ENCODE measurements at regions of chr6 and their contacts with region 1.

Region 1: GRCh38 chr6:31739639-31740396 is at the start of gene MSH5:
- DNase-seq: peak; percentile 100
- H3K4me3 ChIP-seq: peak within 1 kb of the TSS; percentile 23 to 76 (median 61)
- H3K27ac ChIP-seq: peak within 1 kb of the TSS; percentile 94
- H3K4me1 ChIP-seq: peaks cover 31% of the 10 kb centered on the region
- H3K27me3 ChIP-seq: no peaks in the 10 kb centered on the region
- CTCF ChIP-seq: no peak
- POLR2A ChIP-seq: peak; percentile 65
- total RNA-seq, gene MSH5: 43.2 and 43.8 TPM in 2 replicates

Region 2: GRCh38 chr6:31308050-31308844 is 431.6 kb before region 1 on chr6:
- CTCF ChIA-PET with region 1: no interaction called
- POLR2A ChIA-PET with region 1: no interaction called
- dilution Hi-C with region 1: no loop called
- intact Hi-C with region 1: no loop called
- DNase-seq: no peak
- H3K4me3 ChIP-seq: no peak overlapping the region
- H3K27ac ChIP-seq: no peak overlapping the region
- H3K4me1 ChIP-seq: no peaks in the 10 kb centered on the region
- H3K27me3 ChIP-seq: peaks cover 44% of the 10 kb centered on the region in 2 experiments
- CTCF ChIP-seq: no peak
- POLR2A ChIP-seq: no peak

Region 3: DNA sequence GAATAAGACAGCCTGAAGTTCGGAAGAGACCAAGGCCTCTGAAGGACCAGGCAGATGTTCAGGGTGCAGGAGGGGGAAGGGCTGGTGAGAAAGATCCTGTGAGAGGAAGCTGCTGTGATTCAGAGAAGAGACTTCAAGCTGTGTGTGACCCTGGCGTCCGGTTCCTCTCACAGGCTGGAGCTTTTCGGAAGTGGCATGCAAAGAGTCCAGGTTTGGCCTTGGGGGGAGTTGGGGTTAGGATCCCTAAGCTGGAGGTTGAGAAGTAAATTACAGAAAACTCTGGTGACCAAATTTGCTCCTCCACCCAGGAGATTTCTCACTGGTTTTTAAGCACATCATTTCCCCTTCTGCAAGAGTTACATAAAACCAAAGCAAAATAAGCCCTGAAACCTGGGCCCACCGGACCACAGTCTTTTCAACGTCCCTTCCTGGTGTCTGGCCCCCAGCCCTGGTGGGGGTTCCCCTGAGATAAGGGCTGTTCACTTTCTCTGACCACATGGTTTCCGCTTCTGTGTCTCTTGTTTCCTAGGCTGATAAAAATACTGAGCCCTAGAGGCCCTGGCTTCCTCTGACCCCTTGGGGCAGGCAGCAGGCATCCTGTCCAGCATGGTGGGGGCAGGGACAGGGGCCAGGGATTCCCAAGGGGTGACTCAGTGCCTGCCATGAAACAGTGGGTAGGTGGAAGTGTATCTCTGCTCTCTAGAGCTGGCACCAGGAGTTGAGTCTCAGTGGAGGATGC is 179.7 kb before region 1 on chr6:
- CTCF ChIA-PET with region 1: no interaction called
- POLR2A ChIA-PET with region 1: no interaction called
- dilution Hi-C with region 1: no loop called
- intact Hi-C with region 1: no loop called
- DNase-seq: peak; percentile 99
- H3K4me3 ChIP-seq: peak overlapping the region in 1 of 3 experiments; percentile 29
- H3K27ac ChIP-seq: peak overlapping the region; percentile 98
- H3K4me1 ChIP-seq: peaks cover 69% of the 10 kb centered on the region
- H3K27me3 ChIP-seq: no peaks in the 10 kb centered on the region
- CTCF ChIP-seq: no peak
- POLR2A ChIP-seq: peak; percentile 71

Region 4: GRCh38 chr6:31619805-31620585 is 119.8 kb before region 1 on chr6:
- CTCF ChIA-PET with region 1: no interaction called
- POLR2A ChIA-PET with region 1: no interaction called
- dilution Hi-C with region 1: no loop called
- intact Hi-C with region 1: loop called (anchors 1 kb)
- DNase-seq: peak; percentile 100
- H3K4me3 ChIP-seq: peak overlapping the region in 2 of 3 experiments; percentile 57 to 80
- H3K27ac ChIP-seq: peak overlapping the region; percentile 95
- H3K4me1 ChIP-seq: peaks cover 13% of the 10 kb centered on the region
- H3K27me3 ChIP-seq: no peaks in the 10 kb centered on the region
- CTCF ChIP-seq: no peak
- POLR2A ChIP-seq: peak; percentile 73

Region 5: GRCh38 chr6:31660381-31661261 is 79.2 kb before region 1 on chr6 and contains the start of gene C6orf47:
- CTCF ChIA-PET with region 1: no interaction called
- POLR2A ChIA-PET with region 1: no interaction called
- dilution Hi-C with region 1: no loop called
- intact Hi-C with region 1: loop called (anchors 2 kb)
- DNase-seq: peak; percentile 87
- H3K4me3 ChIP-seq: peak within 1 kb of the TSS; percentile 30 to 76 (median 70)
- H3K27ac ChIP-seq: peak within 1 kb of the TSS; percentile 62
- H3K4me1 ChIP-seq: peaks cover 44% of the 10 kb centered on the region
- H3K27me3 ChIP-seq: no peaks in the 10 kb centered on the region
- CTCF ChIP-seq: no peak
- POLR2A ChIP-seq: peak; percentile 92
- total RNA-seq, gene C6orf47: 12.8 and 15.0 TPM in 2 replicates

Region 6: DNA sequence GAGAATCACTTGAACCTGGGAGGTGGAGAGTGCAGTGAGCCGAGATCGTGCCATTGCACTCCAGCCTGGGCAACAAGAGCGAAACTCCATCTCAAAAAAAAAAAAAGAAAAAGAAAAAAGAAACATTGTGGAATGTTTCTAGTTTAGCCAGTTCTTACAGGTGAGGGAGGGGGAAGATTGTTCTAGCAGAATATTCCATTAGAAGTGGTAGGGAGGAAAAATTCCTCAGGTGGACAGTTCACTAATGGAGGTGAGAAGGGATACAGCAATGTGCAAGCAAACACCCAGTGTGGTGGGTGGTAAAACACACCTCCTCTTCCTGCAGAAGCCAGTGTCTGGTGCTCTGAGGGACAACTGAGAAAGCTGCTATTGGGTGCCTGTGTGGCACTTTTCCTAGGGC is 43.3 kb before region 1 on chr6:
- CTCF ChIA-PET with region 1: no interaction called
- POLR2A ChIA-PET with region 1: no interaction called
- dilution Hi-C with region 1: no loop called
- intact Hi-C with region 1: no loop called
- DNase-seq: no peak
- H3K4me3 ChIP-seq: no peak overlapping the region
- H3K27ac ChIP-seq: no peak overlapping the region
- H3K4me1 ChIP-seq: peaks cover 4% of the 10 kb centered on the region
- H3K27me3 ChIP-seq: no peaks in the 10 kb centered on the region
- CTCF ChIP-seq: no peak
- POLR2A ChIP-seq: no peak

Region 7: GRCh38 chr6:31729515-31729978 is 10.3 kb before region 1 on chr6:
- CTCF ChIA-PET with region 1: interaction called, 13 read pairs
- POLR2A ChIA-PET with region 1: interaction called, 4 read pairs
- dilution Hi-C with region 1: no loop called
- intact Hi-C with region 1: loop called (anchors 1 kb)
- DNase-seq: peak; percentile 90
- H3K4me3 ChIP-seq: peak overlapping the region; percentile 66 to 94 (median 70)
- H3K27ac ChIP-seq: peak overlapping the region; percentile 54
- H3K4me1 ChIP-seq: peaks cover 37% of the 10 kb centered on the region
- H3K27me3 ChIP-seq: no peaks in the 10 kb centered on the region
- CTCF ChIP-seq: peak in 1 of 2 donors; percentile 73
- POLR2A ChIP-seq: no peak

Region 8: GRCh38 chr6:31795616-31796298 is 55.9 kb after region 1 on chr6 and contains the start of gene VARS1:
- CTCF ChIA-PET with region 1: interaction called, 8 read pairs
- POLR2A ChIA-PET with region 1: interaction called, 7 read pairs
- dilution Hi-C with region 1: no loop called
- intact Hi-C with region 1: loop called (anchors 2 kb)
- DNase-seq: peak; percentile 87
- H3K4me3 ChIP-seq: peak within 1 kb of the TSS; percentile 49 to 71 (median 67)
- H3K27ac ChIP-seq: peak within 1 kb of the TSS; percentile 89
- H3K4me1 ChIP-seq: peaks cover 15% of the 10 kb centered on the region
- H3K27me3 ChIP-seq: no peaks in the 10 kb centered on the region
- CTCF ChIP-seq: peak; percentile 78 to 88
- POLR2A ChIP-seq: no peak
- total RNA-seq, gene VARS1: 121 and 125 TPM in 2 replicates

Region 9: DNA sequence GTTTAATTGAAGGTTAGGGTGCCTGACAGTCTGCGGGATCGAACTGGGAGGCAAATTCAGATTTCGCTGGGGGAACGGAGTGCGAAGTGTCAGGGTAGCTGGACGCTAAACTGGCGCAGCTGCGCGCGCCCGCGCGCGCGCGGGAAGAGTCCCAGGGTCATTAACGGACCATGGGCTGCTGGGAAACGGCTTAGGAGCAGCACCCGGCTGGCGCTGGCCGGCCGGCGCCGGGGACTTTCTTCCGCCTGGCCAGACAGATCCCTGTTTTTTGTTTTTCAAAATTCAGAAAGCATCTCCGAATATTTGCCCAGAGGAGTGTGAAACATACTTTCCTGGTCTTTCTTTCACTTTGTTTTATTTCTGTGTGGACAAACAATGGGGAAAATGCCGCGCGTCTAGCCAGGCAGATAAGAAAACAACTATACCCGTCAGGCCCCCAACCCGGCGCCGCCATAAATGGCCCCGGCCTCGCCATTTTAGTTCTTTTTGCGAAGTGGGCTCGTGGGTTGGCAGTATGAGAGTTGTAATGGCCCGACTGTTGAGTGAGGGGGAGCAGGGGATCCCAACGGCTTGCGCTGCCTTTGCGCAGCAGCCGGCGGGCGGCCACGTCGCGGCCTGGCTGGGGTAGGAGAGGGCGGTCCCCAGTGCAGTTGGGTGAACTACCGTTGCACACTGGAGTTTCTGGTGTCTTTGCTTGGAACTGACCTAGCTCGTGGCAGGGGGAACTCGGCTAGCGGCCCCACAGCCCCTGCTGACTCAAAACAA is 94.8 kb after region 1 on chr6:
- CTCF ChIA-PET with region 1: interaction called, 8 read pairs
- POLR2A ChIA-PET with region 1: interaction called, 4 read pairs
- dilution Hi-C with region 1: no loop called
- intact Hi-C with region 1: loop called (anchors 1 kb)
- DNase-seq: peak; percentile 83
- H3K4me3 ChIP-seq: peak overlapping the region; percentile 38 to 98 (median 81)
- H3K27ac ChIP-seq: peak overlapping the region; percentile 97
- H3K4me1 ChIP-seq: peaks cover 32% of the 10 kb centered on the region
- H3K27me3 ChIP-seq: no peaks in the 10 kb centered on the region
- CTCF ChIP-seq: no peak
- POLR2A ChIP-seq: peak; percentile 100

Region 10: DNA sequence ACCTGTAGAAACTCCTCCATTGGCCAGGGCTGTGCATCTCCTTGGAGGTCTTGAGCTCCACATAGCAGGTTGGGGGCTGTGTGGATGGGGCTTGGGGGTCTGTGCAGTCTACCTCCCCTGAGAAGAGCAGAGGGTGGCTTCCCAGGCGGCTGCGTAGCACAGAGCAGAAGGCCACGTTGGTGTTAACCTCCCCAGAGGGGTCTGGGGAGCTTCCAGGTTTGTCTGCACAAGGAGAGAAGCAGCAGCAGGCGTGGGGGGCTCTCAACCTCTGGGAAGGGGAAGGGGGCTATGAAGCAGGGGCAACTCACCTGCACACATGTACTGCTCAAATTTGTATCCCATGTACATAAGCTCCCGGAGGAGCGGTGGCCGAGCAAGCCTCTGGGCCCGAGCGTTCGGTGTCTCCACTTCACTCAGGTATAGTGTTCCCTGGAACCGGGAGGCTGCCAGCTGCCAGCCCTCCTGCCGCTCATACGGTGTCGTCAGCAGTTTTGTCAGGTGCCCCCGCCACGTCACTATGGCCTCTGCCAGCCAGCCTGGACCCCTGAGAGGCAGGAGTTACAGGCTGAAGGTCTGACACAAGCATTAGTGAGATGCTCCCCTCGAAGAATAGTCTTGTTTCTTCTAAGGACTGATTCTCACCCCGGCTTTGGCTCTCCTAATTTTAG is 230.9 kb after region 1 on chr6:
- CTCF ChIA-PET with region 1: no interaction called
- POLR2A ChIA-PET with region 1: no interaction called
- dilution Hi-C with region 1: no loop called
- intact Hi-C with region 1: no loop called
- DNase-seq: no peak
- H3K4me3 ChIP-seq: peak overlapping the region in 2 of 3 experiments; percentile 63 to 73
- H3K27ac ChIP-seq: peak overlapping the region; percentile 79
- H3K4me1 ChIP-seq: peaks cover 17% of the 10 kb centered on the region
- H3K27me3 ChIP-seq: no peaks in the 10 kb centered on the region
- CTCF ChIP-seq: no peak
- POLR2A ChIP-seq: no peak